CD4-positive, alpha-beta T cell (primary cell): ENCODE measurements at regions of chr19 and their contacts with region 1.

Region 1: GRCh38 chr19:54390942-54391577 is 24.2 kb upstream of the TTYH1 start:
- DNase-seq: peak; percentile 39 to 88 (median 62)
- ATAC-seq: peak; percentile 31
- H3K4me3 ChIP-seq: no peak overlapping the region
- H3K4me3 Mint-ChIP-seq: peak overlapping the region; percentile 76
- H3K27ac ChIP-seq: no peak overlapping the region
- H3K27ac Mint-ChIP-seq: peak overlapping the region; percentile 1
- H3K4me1 ChIP-seq: peaks cover 44% of the 10 kb centered on the region
- H3K4me1 Mint-ChIP-seq: peaks cover 34% of the 10 kb centered on the region
- H3K27me3 ChIP-seq: no peaks in the 10 kb centered on the region
- H3K27me3 Mint-ChIP-seq: no peaks in the 10 kb centered on the region
- CTCF ChIP-seq: peak; percentile 95

Region 2: DNA sequence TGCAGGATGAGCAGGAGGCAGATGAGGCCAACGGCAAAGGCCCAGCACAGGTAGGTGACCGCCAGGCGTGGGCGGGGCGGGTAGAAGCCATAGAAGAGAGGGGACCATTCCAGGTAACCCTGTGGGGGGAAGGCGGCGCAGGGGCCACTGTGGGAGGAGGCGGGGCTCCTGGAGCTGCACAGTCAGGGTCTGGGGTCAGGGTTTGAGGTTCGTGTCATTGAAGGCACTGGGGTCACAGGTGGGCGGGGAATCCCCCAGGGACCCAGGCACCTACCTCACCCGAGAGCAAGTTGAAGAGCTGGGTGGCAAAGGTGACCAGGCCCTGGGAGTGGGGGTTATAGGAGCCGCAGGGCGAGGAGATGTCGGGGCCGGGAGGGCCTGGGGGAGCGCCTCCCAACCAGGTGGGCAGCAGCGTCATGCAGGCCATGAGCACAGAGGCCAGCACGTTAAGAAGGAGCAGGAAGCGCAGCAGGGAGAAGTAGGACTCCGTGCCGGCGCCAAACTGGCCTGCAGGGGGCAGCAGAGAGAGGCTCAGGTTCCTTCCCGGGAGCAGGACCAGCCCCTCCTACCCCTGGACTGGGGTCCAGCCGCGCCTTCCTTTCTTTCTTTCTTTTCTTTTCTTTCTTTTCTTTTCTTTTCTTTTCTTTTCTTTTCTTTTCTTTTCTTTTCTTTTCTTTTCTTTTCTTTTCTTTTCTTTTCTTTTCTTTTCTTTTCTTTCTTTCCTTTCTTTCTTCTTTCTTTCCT is 222.7 kb before region 1 on chr19:
- CTCF ChIA-PET with region 1: no interaction called
- POLR2A ChIA-PET with region 1: no interaction called
- intact Hi-C with region 1: loop called in 1 of 2 experiments (anchors 2 kb)
- DNase-seq: peak; percentile 79 to 97 (median 90)
- ATAC-seq: peak; percentile 83
- H3K4me3 ChIP-seq: no peak overlapping the region
- H3K4me3 Mint-ChIP-seq: no peak overlapping the region
- H3K27ac ChIP-seq: no peak overlapping the region
- H3K27ac Mint-ChIP-seq: no peak overlapping the region
- H3K4me1 ChIP-seq: peaks cover 34% of the 10 kb centered on the region
- H3K4me1 Mint-ChIP-seq: peaks cover 12% of the 10 kb centered on the region
- H3K27me3 ChIP-seq: no peaks in the 10 kb centered on the region
- H3K27me3 Mint-ChIP-seq: no peaks in the 10 kb centered on the region
- CTCF ChIP-seq: peak; percentile 80

Region 3: GRCh38 chr19:54281007-54281728 is 109.9 kb before region 1 on chr19 and contains the start of gene LILRB2:
- CTCF ChIA-PET with region 1: no interaction called
- POLR2A ChIA-PET with region 1: no interaction called
- intact Hi-C with region 1: no loop called
- DNase-seq: peak in 2 of 14 experiments; percentile 34 to 38
- ATAC-seq: no peak
- H3K4me3 ChIP-seq: peak within 1 kb of the TSS; percentile 29
- H3K4me3 Mint-ChIP-seq: no peak within 1 kb of the TSS
- H3K27ac ChIP-seq: no peak within 1 kb of the TSS
- H3K27ac Mint-ChIP-seq: no peak within 1 kb of the TSS
- H3K4me1 ChIP-seq: peaks cover 2% of the 10 kb centered on the region
- H3K4me1 Mint-ChIP-seq: peaks cover 5% of the 10 kb centered on the region
- H3K27me3 ChIP-seq: peaks cover 7 to 9% of the 10 kb centered on the region in 2 experiments
- H3K27me3 Mint-ChIP-seq: peaks cover 50% of the 10 kb centered on the region
- CTCF ChIP-seq: no peak
- total RNA-seq, gene LILRB2: 1.3 to 1.5 TPM

Region 4: GRCh38 chr19:54325194-54325621 is 65.9 kb before region 1 on chr19:
- CTCF ChIA-PET with region 1: interaction called, 12 read pairs
- POLR2A ChIA-PET with region 1: interaction called, 9 read pairs
- intact Hi-C with region 1: loop called (anchors 1 kb)
- DNase-seq: peak in 12 of 14 experiments; percentile 26 to 81 (median 39)
- ATAC-seq: peak; percentile 78
- H3K4me3 ChIP-seq: no peak overlapping the region
- H3K4me3 Mint-ChIP-seq: no peak overlapping the region
- H3K27ac ChIP-seq: no peak overlapping the region
- H3K27ac Mint-ChIP-seq: no peak overlapping the region
- H3K4me1 ChIP-seq: peaks cover 12% of the 10 kb centered on the region
- H3K4me1 Mint-ChIP-seq: peaks cover 14% of the 10 kb centered on the region
- H3K27me3 ChIP-seq: no peaks in the 10 kb centered on the region
- H3K27me3 Mint-ChIP-seq: peaks cover 21% of the 10 kb centered on the region
- CTCF ChIP-seq: peak; percentile 93

Region 5: DNA sequence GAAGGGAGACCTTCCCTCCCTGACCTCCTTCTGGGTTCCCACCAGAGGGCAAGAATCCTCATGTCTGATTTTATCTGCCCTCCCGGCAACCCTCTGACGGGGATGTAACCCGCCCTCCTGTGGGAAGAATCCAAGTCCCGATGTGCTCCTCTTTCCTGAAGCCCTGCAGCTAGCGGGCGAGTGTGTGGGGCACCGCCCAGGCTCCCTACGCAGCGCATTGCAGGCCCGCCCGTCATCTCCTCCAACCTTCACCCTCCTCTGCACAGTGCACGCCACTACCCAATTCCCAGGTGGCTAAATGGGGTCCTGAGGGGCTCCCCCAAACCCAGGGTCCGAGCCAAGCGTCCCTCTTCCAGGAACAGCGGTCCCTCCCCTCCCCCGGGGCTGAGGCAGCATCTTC is 33.7 kb before region 1 on chr19:
- CTCF ChIA-PET with region 1: interaction called, 4 read pairs
- POLR2A ChIA-PET with region 1: interaction called, 11 read pairs
- intact Hi-C with region 1: loop called in 1 of 2 experiments (anchors 2 kb)
- DNase-seq: no peak
- ATAC-seq: no peak
- H3K4me3 ChIP-seq: no peak overlapping the region
- H3K4me3 Mint-ChIP-seq: no peak overlapping the region
- H3K27ac ChIP-seq: no peak overlapping the region
- H3K27ac Mint-ChIP-seq: no peak overlapping the region
- H3K4me1 ChIP-seq: peaks cover 21% of the 10 kb centered on the region
- H3K4me1 Mint-ChIP-seq: peaks cover 25% of the 10 kb centered on the region
- H3K27me3 ChIP-seq: no peaks in the 10 kb centered on the region
- H3K27me3 Mint-ChIP-seq: no peaks in the 10 kb centered on the region
- CTCF ChIP-seq: no peak

Region 6: GRCh38 chr19:54364775-54365257 is 26.2 kb before region 1 on chr19 and contains the start of gene LAIR1:
- CTCF ChIA-PET with region 1: interaction called, 5 read pairs
- POLR2A ChIA-PET with region 1: interaction called, 11 read pairs
- intact Hi-C with region 1: loop called in 1 of 2 experiments (anchors 2 kb)
- DNase-seq: peak; percentile 25 to 72 (median 52)
- ATAC-seq: peak; percentile 63
- H3K4me3 ChIP-seq: peak within 1 kb of the TSS; percentile 64
- H3K4me3 Mint-ChIP-seq: peak within 1 kb of the TSS; percentile 79
- H3K27ac ChIP-seq: peak within 1 kb of the TSS; percentile 29 to 58
- H3K27ac Mint-ChIP-seq: peak within 1 kb of the TSS; percentile 87
- H3K4me1 ChIP-seq: peaks cover 69% of the 10 kb centered on the region
- H3K4me1 Mint-ChIP-seq: peaks cover 70% of the 10 kb centered on the region
- H3K27me3 ChIP-seq: no peaks in the 10 kb centered on the region
- H3K27me3 Mint-ChIP-seq: no peaks in the 10 kb centered on the region
- CTCF ChIP-seq: no peak
- total RNA-seq, gene LAIR1: 12.3 to 14.4 TPM

Region 7: DNA sequence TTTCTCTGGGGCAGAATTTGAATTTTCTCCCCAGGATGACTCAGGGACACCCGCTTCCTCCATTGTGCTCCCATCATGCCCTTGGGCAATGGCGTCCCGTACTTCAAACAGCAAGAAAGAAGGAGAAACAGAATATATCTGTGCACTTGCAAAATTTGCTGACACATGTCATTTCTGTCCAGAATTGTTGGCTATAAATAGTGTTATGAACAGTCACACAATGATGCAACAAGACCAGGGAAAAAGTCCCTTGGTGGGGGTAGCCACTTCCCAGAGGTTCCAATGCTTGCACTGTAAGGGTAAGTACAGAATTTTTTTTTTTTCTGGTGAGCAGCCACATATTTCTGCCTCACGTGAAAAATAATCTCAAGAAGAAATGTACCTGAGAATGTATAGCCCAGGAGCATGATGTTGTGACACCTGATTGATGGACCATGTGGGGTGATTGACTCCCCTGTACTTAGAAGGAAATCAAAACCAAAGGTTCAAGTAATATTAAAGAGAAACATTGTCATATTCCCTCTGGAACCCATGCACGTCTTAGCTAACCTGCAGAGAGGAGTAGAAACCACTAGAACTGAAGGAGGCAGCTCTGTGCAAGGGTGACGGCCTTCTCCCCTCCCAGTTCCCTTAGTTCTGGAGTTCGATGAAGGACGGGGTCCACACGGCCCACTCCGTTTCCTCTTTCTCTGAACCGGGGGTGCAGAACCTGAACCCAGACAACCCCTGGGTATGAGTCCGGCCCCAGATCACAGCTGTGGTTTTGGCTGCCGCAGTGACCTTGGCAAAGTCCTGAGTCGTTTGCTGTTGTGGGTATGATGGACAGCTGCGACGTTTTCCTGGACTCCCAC is 17.1 kb before region 1 on chr19:
- CTCF ChIA-PET with region 1: interaction called, 6 read pairs
- POLR2A ChIA-PET with region 1: interaction called, 31 read pairs
- intact Hi-C with region 1: no loop called
- DNase-seq: peak in 2 of 14 experiments; percentile 62 to 74
- ATAC-seq: no peak
- H3K4me3 ChIP-seq: no peak overlapping the region
- H3K4me3 Mint-ChIP-seq: peak overlapping the region; percentile 34
- H3K27ac ChIP-seq: no peak overlapping the region
- H3K27ac Mint-ChIP-seq: no peak overlapping the region
- H3K4me1 ChIP-seq: peaks cover 78% of the 10 kb centered on the region
- H3K4me1 Mint-ChIP-seq: peaks cover 81% of the 10 kb centered on the region
- H3K27me3 ChIP-seq: no peaks in the 10 kb centered on the region
- H3K27me3 Mint-ChIP-seq: peaks cover 13% of the 10 kb centered on the region
- CTCF ChIP-seq: no peak

Region 8: GRCh38 chr19:54415208-54415900 is 24.3 kb after region 1 on chr19 and contains the start of gene TTYH1:
- CTCF ChIA-PET with region 1: no interaction called
- POLR2A ChIA-PET with region 1: no interaction called
- intact Hi-C with region 1: no loop called
- DNase-seq: peak in 8 of 14 experiments; percentile 12 to 59 (median 30)
- ATAC-seq: peak; percentile 66
- H3K4me3 ChIP-seq: no peak within 1 kb of the TSS
- H3K4me3 Mint-ChIP-seq: no peak within 1 kb of the TSS
- H3K27ac ChIP-seq: no peak within 1 kb of the TSS
- H3K27ac Mint-ChIP-seq: no peak within 1 kb of the TSS
- H3K4me1 ChIP-seq: peaks cover 21% of the 10 kb centered on the region
- H3K4me1 Mint-ChIP-seq: peaks cover 20% of the 10 kb centered on the region
- H3K27me3 ChIP-seq: peaks cover 41 to 52% of the 10 kb centered on the region in 2 experiments
- H3K27me3 Mint-ChIP-seq: peaks cover 53% of the 10 kb centered on the region
- CTCF ChIP-seq: no peak
- total RNA-seq, gene TTYH1: not detected

Region 9: GRCh38 chr19:54448774-54449700 is 58.0 kb after region 1 on chr19 and contains the start of gene LENG8:
- CTCF ChIA-PET with region 1: no interaction called
- POLR2A ChIA-PET with region 1: interaction called, 12 read pairs
- intact Hi-C with region 1: no loop called
- DNase-seq: peak; percentile 93 to 100 (median 97)
- ATAC-seq: peak; percentile 90
- H3K4me3 ChIP-seq: peak within 1 kb of the TSS; percentile 98
- H3K4me3 Mint-ChIP-seq: peak within 1 kb of the TSS; percentile 92
- H3K27ac ChIP-seq: peak within 1 kb of the TSS; percentile 91 to 98
- H3K27ac Mint-ChIP-seq: peak within 1 kb of the TSS; percentile 98
- H3K4me1 ChIP-seq: peaks cover 48% of the 10 kb centered on the region
- H3K4me1 Mint-ChIP-seq: peaks cover 56% of the 10 kb centered on the region
- H3K27me3 ChIP-seq: no peaks in the 10 kb centered on the region
- H3K27me3 Mint-ChIP-seq: no peaks in the 10 kb centered on the region
- CTCF ChIP-seq: no peak
- total RNA-seq, gene LENG8: 610 to 639 TPM